Activated naive CD4-positive, alpha-beta T cell treated with anti-CD3 and anti-CD28 coated beads, Interleukin-2, amount 10 ng/mL, durations not matched to agents 7 days and 5 days (primary cell): ENCODE measurements at regions of chr1 and their contacts with region 1.

Region 1: DNA sequence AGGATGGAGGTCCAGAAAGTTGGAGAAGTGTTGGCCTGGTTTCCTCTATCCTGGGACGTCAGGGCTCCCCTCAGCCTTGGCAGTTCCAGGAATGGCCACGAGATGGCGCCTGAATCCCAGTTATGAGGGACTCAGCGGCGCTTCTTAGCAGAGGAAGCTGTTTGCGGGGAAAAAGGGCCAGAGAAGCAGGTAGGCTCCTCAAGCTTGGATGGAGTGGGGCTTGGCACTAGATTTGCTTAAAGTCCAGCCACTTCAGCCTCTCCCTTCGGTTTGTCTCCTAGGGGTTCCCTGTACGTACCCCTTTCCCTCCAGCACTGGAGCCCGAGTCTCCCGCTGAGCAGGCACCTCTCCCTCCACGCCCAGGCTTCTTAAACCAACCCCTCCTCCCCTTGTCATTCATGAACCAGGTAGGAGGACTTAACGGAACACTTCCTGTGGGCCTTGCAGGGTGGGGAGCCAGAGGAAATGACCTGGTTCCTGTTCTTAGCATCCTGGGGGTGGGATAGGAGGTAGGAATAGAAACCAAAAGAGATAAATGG is 32.0 kb upstream of the TENT5B start:
- DNase-seq: peak; percentile 93
- H3K4me3 Mint-ChIP-seq: peak overlapping the region; percentile 65
- H3K27ac Mint-ChIP-seq: peak overlapping the region; percentile 82
- H3K4me1 Mint-ChIP-seq: peaks cover 22% of the 10 kb centered on the region
- H3K27me3 Mint-ChIP-seq: peaks cover 25% of the 10 kb centered on the region

Region 2: DNA sequence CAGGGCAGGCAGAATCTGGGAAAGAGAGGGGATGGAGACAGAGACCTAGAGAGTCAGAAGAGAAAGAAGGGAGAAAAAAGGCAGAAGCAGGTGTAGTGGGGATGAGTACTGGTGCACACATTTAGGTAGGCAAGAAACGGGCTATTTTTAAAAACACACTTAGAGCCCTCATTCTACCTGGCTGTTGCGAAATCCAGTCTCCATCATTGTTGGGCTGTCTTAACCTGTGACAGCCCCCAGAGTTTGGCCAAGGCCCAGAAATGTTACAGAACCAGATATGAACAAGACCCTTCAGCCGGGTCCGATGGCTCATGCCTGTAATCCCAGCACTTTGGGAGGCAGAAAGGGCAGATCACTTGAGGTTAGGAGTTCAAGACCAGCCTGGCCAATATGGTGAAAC is 71.9 kb before region 1 on chr1:
- CTCF ChIA-PET with region 1: no interaction called
- DNase-seq: no peak
- H3K4me3 Mint-ChIP-seq: no peak overlapping the region
- H3K27ac Mint-ChIP-seq: no peak overlapping the region
- H3K4me1 Mint-ChIP-seq: peaks cover 7% of the 10 kb centered on the region
- H3K27me3 Mint-ChIP-seq: peaks cover 35% of the 10 kb centered on the region

Region 3: DNA sequence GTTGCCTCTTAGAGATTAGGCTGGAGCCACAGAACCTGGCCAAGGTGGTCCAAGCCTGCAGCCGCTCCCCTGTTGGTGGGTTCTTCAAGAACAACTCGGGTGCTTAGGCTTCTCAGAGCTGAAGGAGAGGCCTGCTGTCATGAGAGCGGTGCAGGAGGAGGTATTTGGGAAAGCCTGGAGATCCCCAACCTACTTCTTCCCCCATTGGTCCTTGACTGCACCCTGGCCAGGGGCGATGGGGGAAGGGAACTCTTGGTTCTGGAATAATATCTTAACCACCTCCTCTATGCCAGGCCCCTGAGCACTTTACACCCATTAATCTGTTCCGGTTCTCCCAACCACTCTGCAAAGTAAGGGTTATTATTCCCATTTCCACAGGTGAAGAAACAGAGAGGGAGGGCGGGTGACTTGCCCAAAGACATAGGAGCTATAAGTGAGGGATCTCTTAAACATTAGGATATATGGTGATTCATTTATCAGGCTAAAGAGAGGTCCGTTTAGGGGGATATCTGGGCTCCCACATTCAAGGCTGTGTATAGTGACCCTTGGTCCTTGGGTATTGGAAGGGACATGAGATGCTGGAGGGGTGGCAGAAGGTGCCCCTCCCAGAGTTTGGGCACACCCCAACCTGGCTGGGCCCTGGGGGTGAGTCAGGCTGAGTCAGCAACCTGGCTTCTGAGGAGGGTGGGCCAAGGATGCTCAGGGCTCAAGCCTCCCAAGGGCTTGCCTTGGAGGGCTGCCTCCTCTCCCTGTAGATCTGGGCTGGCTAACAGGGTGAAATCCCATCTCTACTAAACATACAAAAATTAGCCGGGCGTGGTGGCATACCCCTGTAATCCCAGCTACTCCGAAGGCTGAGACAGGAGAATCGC is 46.0 kb before region 1 on chr1:
- CTCF ChIA-PET with region 1: interaction called, 35 read pairs
- DNase-seq: no peak
- H3K4me3 Mint-ChIP-seq: no peak overlapping the region
- H3K27ac Mint-ChIP-seq: no peak overlapping the region
- H3K4me1 Mint-ChIP-seq: peaks cover 8% of the 10 kb centered on the region
- H3K27me3 Mint-ChIP-seq: peaks cover 94% of the 10 kb centered on the region

Region 4: GRCh38 chr1:27074175-27074780 is 29.6 kb after region 1 on chr1:
- CTCF ChIA-PET with region 1: interaction called, 13 read pairs
- DNase-seq: no peak
- H3K4me3 Mint-ChIP-seq: no peak overlapping the region
- H3K27ac Mint-ChIP-seq: no peak overlapping the region
- H3K4me1 Mint-ChIP-seq: no peaks in the 10 kb centered on the region
- H3K27me3 Mint-ChIP-seq: peaks cover 41% of the 10 kb centered on the region

Region 5: DNA sequence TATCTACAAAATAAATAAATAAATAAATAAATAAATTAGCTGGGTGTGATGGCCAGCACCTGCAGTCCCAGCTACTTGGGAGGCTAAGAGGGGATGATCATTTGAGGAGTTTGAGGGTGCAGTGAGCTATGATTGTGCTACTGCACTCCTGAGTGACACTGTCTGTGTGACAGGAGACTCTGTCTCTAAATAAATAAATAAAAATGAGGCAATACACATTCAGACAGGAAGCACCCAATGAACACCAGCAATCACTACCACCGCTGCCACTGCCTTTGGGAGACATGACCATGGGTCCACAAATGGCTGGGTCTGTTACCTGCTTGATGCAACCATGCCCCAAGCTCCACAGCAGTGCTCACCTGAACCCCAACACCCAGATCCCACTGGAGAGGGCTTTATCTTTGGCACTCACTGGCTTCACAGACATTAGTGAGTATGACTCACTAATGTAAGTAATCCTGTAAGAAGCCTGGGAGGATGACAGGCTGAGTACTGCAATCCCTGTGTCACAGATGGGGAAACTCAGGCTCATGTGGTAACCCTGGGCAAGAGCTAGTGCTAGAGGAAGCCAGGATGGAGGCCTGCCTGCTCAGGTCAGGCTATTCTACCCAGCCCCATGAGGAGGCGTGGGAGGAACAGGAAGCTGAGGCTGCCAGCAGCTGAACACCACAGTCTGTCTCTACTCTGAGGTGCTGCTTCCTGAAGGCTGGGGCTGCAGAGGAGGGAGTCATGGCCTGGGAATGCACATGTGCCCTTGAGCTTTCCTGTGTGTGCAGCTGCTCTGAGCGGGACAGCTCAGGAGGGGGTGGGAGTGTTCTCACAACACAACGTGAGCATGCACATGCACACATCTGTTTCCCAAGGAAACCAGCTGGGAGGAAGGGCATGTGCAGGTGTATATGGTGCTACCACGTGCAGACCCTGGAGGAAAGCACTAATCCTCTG is 67.2 kb after region 1 on chr1:
- CTCF ChIA-PET with region 1: interaction called, 29 read pairs
- DNase-seq: peak; percentile 82
- H3K4me3 Mint-ChIP-seq: no peak overlapping the region
- H3K27ac Mint-ChIP-seq: peak overlapping the region; percentile 92
- H3K4me1 Mint-ChIP-seq: peaks cover 60% of the 10 kb centered on the region
- H3K27me3 Mint-ChIP-seq: no peaks in the 10 kb centered on the region

Region 6: GRCh38 chr1:27284425-27285273 is 240.0 kb after region 1 on chr1:
- CTCF ChIA-PET with region 1: interaction called, 43 read pairs
- DNase-seq: peak; percentile 93
- H3K4me3 Mint-ChIP-seq: no peak overlapping the region
- H3K27ac Mint-ChIP-seq: no peak overlapping the region
- H3K4me1 Mint-ChIP-seq: no peaks in the 10 kb centered on the region
- H3K27me3 Mint-ChIP-seq: no peaks in the 10 kb centered on the region